A673 (cell line): ENCODE measurements at regions of chr6 and their contacts with region 1.

Region 1: DNA sequence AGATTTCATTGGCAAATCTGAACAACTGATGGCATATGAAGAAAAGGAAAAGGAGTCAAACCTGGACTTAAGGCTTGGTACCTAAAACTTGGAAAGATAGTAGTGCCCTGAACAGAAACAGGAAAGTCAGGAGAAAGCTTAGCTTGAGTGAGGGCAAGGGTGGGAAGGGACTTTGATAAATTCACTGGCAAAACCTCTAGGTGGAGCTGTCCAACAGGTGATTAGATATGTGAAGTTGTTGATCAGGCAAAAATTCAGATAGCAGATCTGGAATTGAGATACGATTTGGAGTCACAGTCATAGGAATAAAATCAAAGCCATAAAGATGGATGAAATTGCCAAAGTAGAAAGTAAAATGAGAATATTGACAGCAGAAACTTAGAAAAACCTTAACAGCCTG is 16.1 kb upstream of the ZNF292 start:
- DNase-seq: peak; percentile 71
- H3K4me3 ChIP-seq: no peak overlapping the region
- H3K27ac ChIP-seq: no peak overlapping the region
- H3K4me1 ChIP-seq: no peaks in the 10 kb centered on the region
- H3K27me3 ChIP-seq: peaks cover 4% of the 10 kb centered on the region
- CTCF ChIP-seq: peak; percentile 73

Region 2: DNA sequence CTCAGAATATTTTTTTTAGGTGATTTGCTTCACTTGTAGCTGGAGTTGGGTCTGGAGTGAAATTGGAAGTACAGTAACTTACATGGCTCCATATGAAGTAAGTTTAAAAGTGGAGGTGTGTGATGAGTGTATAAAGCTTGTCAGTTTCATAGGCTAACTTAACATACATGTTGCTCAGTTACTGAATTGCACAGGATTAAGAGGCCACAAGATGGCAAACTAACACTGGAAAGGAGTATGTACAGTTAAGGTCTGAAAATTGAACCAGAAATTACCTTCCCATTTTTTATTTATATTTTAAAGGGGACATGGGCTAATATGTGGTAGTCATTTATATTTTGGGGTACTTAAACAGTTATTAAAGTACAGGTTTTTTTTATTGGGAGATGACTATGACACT is 137.9 kb after region 1 on chr6:
- CTCF ChIA-PET with region 1: no interaction called
- POLR2A ChIA-PET with region 1: no interaction called
- intact Hi-C with region 1: loop called (anchors 10 kb)
- DNase-seq: peak; percentile 40
- H3K4me3 ChIP-seq: no peak overlapping the region
- H3K27ac ChIP-seq: no peak overlapping the region
- H3K4me1 ChIP-seq: no peaks in the 10 kb centered on the region
- H3K27me3 ChIP-seq: peaks cover 5% of the 10 kb centered on the region
- CTCF ChIP-seq: peak; percentile 52

Region 3: GRCh38 chr6:87483929-87484328 is 344.7 kb after region 1 on chr6:
- CTCF ChIA-PET with region 1: no interaction called
- POLR2A ChIA-PET with region 1: no interaction called
- intact Hi-C with region 1: loop called (anchors 10 kb)
- DNase-seq: peak; percentile 44
- H3K4me3 ChIP-seq: no peak overlapping the region
- H3K27ac ChIP-seq: no peak overlapping the region
- H3K4me1 ChIP-seq: peaks cover 34% of the 10 kb centered on the region
- H3K27me3 ChIP-seq: no peaks in the 10 kb centered on the region
- CTCF ChIP-seq: peak; percentile 37